Brain microvascular endothelial cell (primary cell): ENCODE measurements at regions of chr4 and their contacts with region 1.

Region 1: DNA sequence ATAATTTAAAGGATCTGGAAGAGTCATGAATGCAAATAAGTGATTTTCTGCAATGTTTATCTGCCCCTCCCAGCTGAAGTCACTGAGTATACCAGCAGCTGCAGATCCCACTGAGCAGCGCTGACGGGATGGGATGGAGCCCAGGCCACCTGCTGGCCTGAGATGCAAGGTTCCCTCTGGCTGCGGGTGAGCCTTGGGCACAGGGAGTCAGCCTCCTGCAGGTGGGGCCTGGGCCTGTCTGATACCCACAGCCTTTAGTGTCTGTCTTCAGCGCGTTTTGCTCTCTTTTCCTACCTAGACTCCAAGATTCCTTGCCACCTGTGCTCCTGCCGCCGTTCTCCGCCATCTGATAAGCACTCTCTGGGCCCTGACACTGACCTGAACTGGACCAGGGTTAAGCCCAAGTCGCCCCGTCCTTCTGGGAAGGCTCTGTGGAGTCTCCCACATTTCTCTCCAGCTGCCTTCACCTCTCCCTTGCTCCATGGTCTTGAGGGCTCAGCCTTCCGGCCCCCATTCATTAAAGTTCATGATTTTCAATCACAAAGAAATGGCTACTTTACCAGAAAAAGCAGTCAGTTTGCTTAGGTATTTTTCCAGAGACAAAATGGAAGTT is 223.1 kb upstream of the FAT1 start:
- DNase-seq: peak; percentile 40
- H3K4me3 ChIP-seq: no peak overlapping the region
- H3K27ac ChIP-seq: no peak overlapping the region
- H3K27me3 ChIP-seq: no peaks in the 10 kb centered on the region
- CTCF ChIP-seq: peak; percentile 75

Region 2: DNA sequence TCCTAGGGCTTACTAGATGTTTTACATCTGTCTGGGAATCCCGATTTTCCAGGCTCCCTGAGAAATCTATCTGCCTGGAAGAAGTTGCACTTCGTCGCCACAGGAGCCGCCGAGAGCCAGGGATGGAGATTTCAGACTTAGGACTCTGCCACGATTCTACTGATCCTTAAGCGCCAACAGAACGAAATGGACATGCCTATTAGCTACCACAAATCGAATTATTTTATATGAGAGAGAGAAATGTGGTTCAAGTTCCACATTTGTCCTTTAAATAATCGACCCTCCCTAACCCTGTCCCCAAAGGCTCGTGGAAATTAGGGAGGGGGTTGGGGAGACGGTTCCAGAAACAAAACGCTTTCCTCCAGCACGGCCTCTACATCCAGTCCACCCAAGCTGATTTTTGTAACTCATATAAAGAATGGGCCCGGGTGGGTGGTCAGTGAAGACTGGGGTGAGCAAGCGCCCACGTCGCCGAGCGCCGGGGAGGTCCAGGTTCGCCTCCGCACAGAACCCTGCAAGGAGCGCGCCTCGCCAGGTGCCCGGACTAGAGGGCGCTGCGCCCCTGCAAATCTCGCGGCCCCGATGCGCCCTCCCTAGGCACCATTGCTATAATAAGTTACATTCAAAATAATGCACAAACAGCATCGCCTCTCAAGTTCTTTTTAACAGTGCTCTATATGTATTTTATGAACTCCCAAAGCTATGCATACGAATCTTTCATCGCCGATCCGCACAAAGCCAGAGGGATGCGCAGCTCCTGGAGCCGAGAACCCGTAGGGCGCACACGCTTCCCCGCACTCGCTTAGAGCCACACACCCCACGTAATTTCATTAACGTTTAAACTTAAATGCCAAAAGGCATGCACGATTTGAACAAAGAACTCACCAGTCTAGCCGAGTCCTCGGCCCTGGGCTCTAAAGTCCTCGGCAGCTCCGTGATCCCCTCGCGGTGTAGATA is 221.0 kb before region 1 on chr4:
- in situ Hi-C with region 1: loop called (anchors 25 kb)
- DNase-seq: peak; percentile 83
- H3K4me3 ChIP-seq: peak overlapping the region; percentile 70
- H3K27ac ChIP-seq: peak overlapping the region; percentile 96
- H3K27me3 ChIP-seq: no peaks in the 10 kb centered on the region
- CTCF ChIP-seq: peak; percentile 85